ENCODE measurements at regions of chr1 and their contacts with region 1.

Region 1: GRCh38 chr1:239898062-239898730 is 193.5 kb upstream of the FMN2 start:
- DNase-seq: peak; percentile 12
- ATAC-seq: peak; percentile 96
- H3K4me3 ChIP-seq: no peak overlapping the region
- H3K27ac ChIP-seq: no peak overlapping the region
- H3K4me1 ChIP-seq: no peaks in the 10 kb centered on the region
- H3K27me3 ChIP-seq: no peaks in the 10 kb centered on the region
- CTCF ChIP-seq: peak; percentile 89 to 93 (median 90)
- EP300 ChIP-seq: no peak
- POLR2A ChIP-seq: no peak
- RAD21 ChIP-seq: peak; percentile 87

Region 2: DNA sequence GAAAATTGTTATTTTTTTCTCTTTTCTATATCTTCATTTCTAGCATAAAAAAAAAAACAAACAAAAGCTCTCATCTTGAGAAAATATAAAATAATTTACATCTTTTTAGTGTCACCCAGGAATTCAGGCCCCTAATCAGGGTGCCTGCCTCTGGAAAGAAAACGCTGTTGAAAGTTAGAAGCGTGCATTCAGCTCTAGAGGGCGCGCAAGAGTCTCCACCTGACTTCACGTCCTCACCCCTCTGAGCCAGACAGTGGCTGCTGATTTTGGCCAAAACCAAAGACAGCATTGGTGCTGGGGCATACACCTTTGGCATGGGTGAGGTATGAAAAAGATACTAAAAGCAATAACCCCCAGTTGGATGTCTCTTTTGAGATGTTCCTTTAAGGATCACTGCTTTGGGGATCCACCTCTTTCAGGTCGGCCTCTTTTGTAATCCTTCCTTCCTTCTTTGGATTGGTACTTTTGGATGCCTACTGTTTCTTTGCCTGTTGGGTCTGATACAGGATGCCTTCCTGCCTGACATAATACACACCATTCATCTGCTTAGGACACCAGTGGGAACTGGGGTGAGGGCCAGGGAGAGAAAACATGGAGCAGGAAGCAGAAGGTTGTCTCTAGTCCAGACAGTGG is 589.4 kb before region 1 on chr1:
- CTCF ChIA-PET with region 1: interaction called, 5 read pairs
- POLR2A ChIA-PET with region 1: no interaction called
- RAD21 ChIA-PET with region 1: no interaction called
- SMC1A ChIA-PET with region 1: interaction called, 5 read pairs
- in situ Hi-C with region 1: no loop called
- intact Hi-C with region 1: loop called (anchors 2 kb)
- DNase-seq: no peak
- ATAC-seq: peak; percentile 89
- H3K4me3 ChIP-seq: no peak overlapping the region
- H3K27ac ChIP-seq: no peak overlapping the region
- H3K4me1 ChIP-seq: no peaks in the 10 kb centered on the region
- H3K27me3 ChIP-seq: no peaks in the 10 kb centered on the region
- CTCF ChIP-seq: peak; percentile 36 to 65 (median 44); a peak in 5 of 6 replicates
- EP300 ChIP-seq: no peak
- POLR2A ChIP-seq: no peak
- RAD21 ChIP-seq: peak; percentile 23; the same call in 1 of the 2 replicates

Region 3: DNA sequence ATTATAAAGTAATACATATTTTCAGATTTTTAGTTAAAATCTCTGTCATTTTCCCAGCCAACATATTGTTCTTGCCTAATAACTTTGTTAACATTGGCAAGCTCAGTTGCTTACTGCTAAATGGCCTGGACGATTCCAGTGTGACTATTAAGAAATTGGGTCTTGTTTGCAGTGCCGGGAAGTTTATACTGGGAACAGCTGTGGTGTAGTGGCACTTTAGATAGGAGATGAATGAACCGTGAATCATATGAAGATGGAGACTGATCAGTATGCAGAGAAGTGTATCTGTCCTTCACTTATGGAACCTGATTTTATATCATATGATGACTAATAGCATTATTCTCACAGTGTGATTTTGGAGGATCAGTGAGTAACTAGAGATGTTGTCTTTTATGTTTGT is 508.5 kb before region 1 on chr1:
- CTCF ChIA-PET with region 1: interaction called, 3 read pairs
- POLR2A ChIA-PET with region 1: no interaction called
- RAD21 ChIA-PET with region 1: no interaction called
- SMC1A ChIA-PET with region 1: no interaction called
- in situ Hi-C with region 1: loop called (anchors 10 kb)
- intact Hi-C with region 1: no loop called
- DNase-seq: no peak
- ATAC-seq: no peak
- H3K4me3 ChIP-seq: no peak overlapping the region
- H3K27ac ChIP-seq: no peak overlapping the region
- H3K4me1 ChIP-seq: no peaks in the 10 kb centered on the region
- H3K27me3 ChIP-seq: no peaks in the 10 kb centered on the region
- CTCF ChIP-seq: no peak
- EP300 ChIP-seq: no peak
- POLR2A ChIP-seq: no peak
- RAD21 ChIP-seq: no peak

Region 4: GRCh38 chr1:239886266-239886665 is 11.9 kb before region 1 on chr1:
- CTCF ChIA-PET with region 1: interaction called, 16 read pairs
- POLR2A ChIA-PET with region 1: no interaction called
- RAD21 ChIA-PET with region 1: no interaction called
- SMC1A ChIA-PET with region 1: interaction called, 3 read pairs
- in situ Hi-C with region 1: no loop called
- intact Hi-C with region 1: no loop called
- DNase-seq: no peak
- ATAC-seq: no peak
- H3K4me3 ChIP-seq: no peak overlapping the region
- H3K27ac ChIP-seq: no peak overlapping the region
- H3K4me1 ChIP-seq: no peaks in the 10 kb centered on the region
- H3K27me3 ChIP-seq: no peaks in the 10 kb centered on the region
- CTCF ChIP-seq: no peak
- EP300 ChIP-seq: no peak
- POLR2A ChIP-seq: no peak
- RAD21 ChIP-seq: no peak

Region 5: DNA sequence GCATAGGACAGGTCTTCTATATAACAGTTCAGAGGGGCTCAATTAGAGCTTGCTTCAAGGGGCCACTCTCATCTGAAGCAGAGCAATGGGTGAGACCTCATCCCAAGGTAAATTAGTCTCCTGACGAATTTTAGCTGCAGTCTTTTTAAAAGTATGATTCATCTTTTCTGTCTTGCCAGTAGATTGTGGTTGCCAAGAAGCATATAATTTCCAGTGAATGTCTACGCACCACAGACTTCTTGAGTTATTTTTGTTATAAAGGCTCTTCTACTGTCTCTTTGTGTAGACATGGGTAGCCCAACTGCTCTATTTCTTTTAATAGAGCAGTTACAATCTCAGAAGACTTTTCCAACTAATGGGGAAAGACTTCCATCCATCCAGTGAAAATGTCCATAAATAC is 84.6 kb after region 1 on chr1:
- CTCF ChIA-PET with region 1: no interaction called
- POLR2A ChIA-PET with region 1: no interaction called
- RAD21 ChIA-PET with region 1: no interaction called
- SMC1A ChIA-PET with region 1: no interaction called
- in situ Hi-C with region 1: no loop called
- intact Hi-C with region 1: no loop called
- DNase-seq: no peak
- ATAC-seq: no peak
- H3K4me3 ChIP-seq: no peak overlapping the region
- H3K27ac ChIP-seq: no peak overlapping the region
- H3K4me1 ChIP-seq: no peaks in the 10 kb centered on the region
- H3K27me3 ChIP-seq: no peaks in the 10 kb centered on the region
- CTCF ChIP-seq: no peak
- EP300 ChIP-seq: no peak
- POLR2A ChIP-seq: no peak
- RAD21 ChIP-seq: no peak